CD4-positive, alpha-beta memory T cell (primary cell): ENCODE measurements at regions of chrX and their contacts with region 1.

Region 1: GRCh38 chrX:25020905-25021449 is 5.2 kb upstream of the ARX start:
- DNase-seq: peak in 1 of 5 donors; percentile 18
- H3K4me3 ChIP-seq: no peak overlapping the region
- H3K4me3 Mint-ChIP-seq: peak overlapping the region in 7 of 8 donors; percentile 47 to 77 (median 71)
- H3K27ac ChIP-seq: no peak overlapping the region
- H3K27ac Mint-ChIP-seq: no peak overlapping the region
- H3K4me1 ChIP-seq: peaks cover 31% of the 10 kb centered on the region
- H3K4me1 Mint-ChIP-seq: peaks cover 5 to 41% (median 28%) of the 10 kb centered on the region in 4 donors
- H3K27me3 ChIP-seq: peaks cover 34% of the 10 kb centered on the region
- H3K27me3 Mint-ChIP-seq: peaks cover 38 to 52% of the 10 kb centered on the region in 2 donors

Region 2: DNA sequence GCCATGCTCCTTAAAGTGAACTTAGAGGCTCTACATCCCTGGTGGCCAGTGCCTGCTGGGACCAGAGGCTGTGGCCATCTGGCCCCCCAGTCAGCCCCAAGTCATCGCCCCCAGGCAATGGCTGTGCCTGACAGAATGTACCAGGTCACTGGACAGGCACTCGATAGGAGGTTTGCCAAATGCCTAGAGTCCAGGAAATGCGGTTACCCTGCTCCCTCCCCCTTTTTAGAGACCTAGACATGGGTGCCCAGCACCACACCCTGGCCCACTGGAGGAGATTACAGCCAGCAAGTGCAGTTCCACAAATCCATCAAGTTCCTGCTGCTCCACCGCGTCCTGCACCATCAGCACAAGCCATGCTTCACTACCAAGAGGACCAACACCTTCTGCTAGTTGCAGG is 887.7 kb before region 1 on chrX:
- CTCF ChIA-PET with region 1: no interaction called
- POLR2A ChIA-PET with region 1: no interaction called
- intact Hi-C with region 1: no loop called
- DNase-seq: no peak
- H3K4me3 ChIP-seq: no peak overlapping the region
- H3K4me3 Mint-ChIP-seq: no peak overlapping the region
- H3K27ac ChIP-seq: no peak overlapping the region
- H3K27ac Mint-ChIP-seq: no peak overlapping the region
- H3K4me1 ChIP-seq: no peaks in the 10 kb centered on the region
- H3K4me1 Mint-ChIP-seq: no peaks in the 10 kb centered on the region
- H3K27me3 ChIP-seq: no peaks in the 10 kb centered on the region
- H3K27me3 Mint-ChIP-seq: no peaks in the 10 kb centered on the region

Region 3: DNA sequence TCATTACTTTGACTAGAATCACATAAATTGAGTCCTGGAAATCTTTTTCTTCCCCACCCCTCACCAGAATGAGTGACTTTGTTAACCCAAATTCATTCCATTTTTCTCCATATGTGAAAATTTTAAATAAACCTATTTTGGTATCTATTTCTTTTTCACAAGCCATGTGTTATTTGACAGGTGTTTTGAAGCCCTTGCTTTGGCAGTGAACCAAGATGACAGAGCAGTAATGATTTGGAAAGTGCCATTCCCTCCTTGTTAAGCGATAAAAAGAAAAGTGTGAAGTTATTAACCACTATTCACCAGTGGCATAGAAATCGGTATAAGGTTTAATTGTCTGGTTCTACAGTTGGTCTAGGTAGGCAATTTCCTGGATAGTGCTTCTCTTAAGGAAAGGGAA is 261.2 kb before region 1 on chrX:
- CTCF ChIA-PET with region 1: no interaction called
- POLR2A ChIA-PET with region 1: no interaction called
- intact Hi-C with region 1: loop called (anchors 10 kb)
- DNase-seq: no peak
- H3K4me3 ChIP-seq: no peak overlapping the region
- H3K4me3 Mint-ChIP-seq: no peak overlapping the region
- H3K27ac ChIP-seq: no peak overlapping the region
- H3K27ac Mint-ChIP-seq: no peak overlapping the region
- H3K4me1 ChIP-seq: no peaks in the 10 kb centered on the region
- H3K4me1 Mint-ChIP-seq: peaks cover 0 to 1% (median 0%) of the 10 kb centered on the region in 4 donors
- H3K27me3 ChIP-seq: no peaks in the 10 kb centered on the region
- H3K27me3 Mint-ChIP-seq: no peaks in the 10 kb centered on the region

Region 4: DNA sequence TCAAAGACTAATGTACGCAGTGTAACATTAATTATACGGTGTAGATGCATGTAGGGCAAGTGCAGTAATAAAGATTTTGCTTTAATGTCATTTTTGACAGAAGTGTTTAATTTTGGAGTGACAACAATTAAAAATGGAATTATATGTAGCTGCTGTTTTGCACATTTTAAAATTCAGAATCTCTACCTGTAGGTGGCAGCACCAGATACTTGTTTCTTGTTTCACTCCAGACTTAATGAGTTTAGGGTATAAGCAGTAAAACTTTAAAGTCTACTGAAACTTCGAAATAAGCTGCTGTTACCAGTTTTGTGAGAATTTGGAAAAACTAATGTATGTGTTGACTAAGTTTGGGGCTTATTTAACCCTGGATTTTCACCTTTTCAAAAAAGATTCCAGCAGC is 182.3 kb before region 1 on chrX:
- CTCF ChIA-PET with region 1: interaction called, 7 read pairs
- POLR2A ChIA-PET with region 1: no interaction called
- intact Hi-C with region 1: loop called (anchors 5 kb)
- DNase-seq: peak in 4 of 5 donors; percentile 19 to 25 (median 20)
- H3K4me3 ChIP-seq: no peak overlapping the region
- H3K4me3 Mint-ChIP-seq: no peak overlapping the region
- H3K27ac ChIP-seq: no peak overlapping the region
- H3K27ac Mint-ChIP-seq: no peak overlapping the region
- H3K4me1 ChIP-seq: no peaks in the 10 kb centered on the region
- H3K4me1 Mint-ChIP-seq: no peaks in the 10 kb centered on the region
- H3K27me3 ChIP-seq: no peaks in the 10 kb centered on the region
- H3K27me3 Mint-ChIP-seq: no peaks in the 10 kb centered on the region

Region 5: GRCh38 chrX:25039036-25039435 is 18.1 kb after region 1 on chrX:
- CTCF ChIA-PET with region 1: no interaction called
- POLR2A ChIA-PET with region 1: no interaction called
- intact Hi-C with region 1: no loop called
- DNase-seq: no peak
- H3K4me3 ChIP-seq: no peak overlapping the region
- H3K4me3 Mint-ChIP-seq: no peak overlapping the region
- H3K27ac ChIP-seq: no peak overlapping the region
- H3K27ac Mint-ChIP-seq: no peak overlapping the region
- H3K4me1 ChIP-seq: no peaks in the 10 kb centered on the region
- H3K4me1 Mint-ChIP-seq: no peaks in the 10 kb centered on the region
- H3K27me3 ChIP-seq: no peaks in the 10 kb centered on the region
- H3K27me3 Mint-ChIP-seq: no peaks in the 10 kb centered on the region